HEK293 (cell line): ENCODE measurements at regions of chr9 and their contacts with region 1.

Region 1: GRCh38 chr9:136849038-136849959 is at the start of gene PHPT1:
- H3K4me3 ChIP-seq: peak within 1 kb of the TSS; percentile 86
- H3K27ac ChIP-seq: peak within 1 kb of the TSS; percentile 94
- H3K4me1 ChIP-seq: 0 out of 2 replicates have a peak, but pooled peaks cover 4% of the 10 kb centered on the region
- CTCF ChIP-seq: no peak

Region 2: GRCh38 chr9:136799854-136800657 is 49.2 kb before region 1 on chr9:
- CTCF ChIA-PET with region 1: interaction called, 5 read pairs
- POLR2A ChIA-PET with region 1: interaction called, 17 read pairs
- H3K4me3 ChIP-seq: peak overlapping the region; percentile 44
- H3K27ac ChIP-seq: peak overlapping the region; percentile 16; the same call in 1 of the 2 replicates
- H3K4me1 ChIP-seq: peaks cover 14% of the 10 kb centered on the region
- CTCF ChIP-seq: no peak

Region 3: GRCh38 chr9:136820971-136821825 is 28.1 kb before region 1 on chr9:
- CTCF ChIA-PET with region 1: interaction called, 14 read pairs
- POLR2A ChIA-PET with region 1: interaction called, 3 read pairs
- H3K4me3 ChIP-seq: no peak overlapping the region
- H3K27ac ChIP-seq: no peak overlapping the region
- H3K4me1 ChIP-seq: no peaks in the 10 kb centered on the region
- CTCF ChIP-seq: no peak

Region 4: DNA sequence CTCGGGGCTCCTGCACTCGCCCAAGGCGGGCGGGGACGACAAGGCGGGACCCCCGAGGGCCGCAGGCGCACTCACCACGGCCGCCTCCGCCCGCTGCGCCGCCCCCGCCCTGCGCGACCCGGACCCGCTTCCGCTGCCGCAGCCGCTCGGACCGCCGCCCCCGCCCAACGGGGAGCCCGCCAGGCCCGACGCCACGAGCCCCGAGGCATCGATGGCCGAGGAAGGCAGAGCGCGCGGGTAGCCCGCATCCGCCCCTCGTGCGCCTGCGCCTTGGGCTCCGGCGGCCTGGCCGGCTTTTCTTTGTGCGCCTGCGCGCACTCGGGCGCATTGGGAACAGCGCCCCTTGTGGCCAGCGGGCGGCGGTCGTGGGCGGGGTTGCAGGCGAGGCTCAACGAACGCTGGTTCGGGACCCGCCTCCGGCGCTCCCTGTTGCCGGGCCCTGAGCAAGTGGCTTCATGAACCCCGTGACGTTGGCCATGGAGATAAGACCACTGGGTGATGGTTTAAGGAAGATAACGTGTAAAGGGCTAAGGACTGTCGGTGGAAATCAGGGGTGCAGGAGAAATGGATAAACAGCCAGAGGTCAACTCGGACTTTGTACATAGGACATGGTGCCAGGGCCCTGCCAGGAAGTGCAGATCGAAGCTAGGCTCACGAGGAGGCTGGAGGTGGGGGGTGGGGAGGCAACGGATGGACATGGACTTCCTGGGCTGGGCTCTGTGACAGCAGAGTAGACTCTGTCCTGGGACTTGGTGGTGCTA is 95.4 kb after region 1 on chr9 and contains the starts of genes C8G and FBXW5:
- CTCF ChIA-PET with region 1: no interaction called
- POLR2A ChIA-PET with region 1: no interaction called
- H3K4me3 ChIP-seq: peak within 1 kb of the TSS; percentile 51
- H3K27ac ChIP-seq: peak within 1 kb of the TSS; percentile 90
- H3K4me1 ChIP-seq: no peaks in the 10 kb centered on the region
- CTCF ChIP-seq: peak; percentile 96